ENCODE measurements at regions of chr3 and their contacts with region 1.

Region 1: DNA sequence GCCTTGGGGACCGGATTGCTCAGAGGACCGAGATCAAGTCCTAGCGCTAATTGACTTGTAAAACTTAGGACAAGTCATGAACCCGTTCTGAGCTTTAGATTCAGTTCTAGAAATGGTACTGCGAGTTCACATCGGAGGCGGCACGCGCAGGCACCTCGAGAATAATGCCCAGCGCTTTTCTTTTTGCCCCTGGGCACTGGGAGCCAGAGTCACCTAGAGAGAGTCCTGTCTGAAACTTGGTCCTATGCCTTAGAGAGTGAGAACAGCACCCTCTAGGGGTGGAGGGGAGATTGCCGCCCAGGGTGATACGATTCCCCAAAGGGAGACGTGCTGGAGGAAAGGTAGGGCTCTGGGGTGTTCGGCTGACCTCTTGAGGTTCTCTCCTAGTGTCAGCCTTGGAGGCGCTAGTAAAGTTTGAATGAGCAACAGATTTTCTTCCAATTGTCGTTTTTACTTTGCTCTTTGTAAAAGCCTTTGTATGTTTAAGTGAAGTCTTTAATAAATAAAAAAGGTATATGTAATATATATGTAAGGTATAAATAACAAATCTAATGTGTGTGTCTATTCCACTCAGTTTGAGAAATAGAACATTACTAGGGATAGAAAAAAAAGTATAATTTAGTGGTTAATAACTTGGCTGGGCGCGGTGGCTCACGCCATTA is 826 bp downstream of the EEF1AKMT4 start:
- DNase-seq: peak; percentile 70 to 87 (median 83)
- ATAC-seq: peak; percentile 77
- H3K4me3 ChIP-seq: peak overlapping the region; percentile 100
- H3K4me3 Mint-ChIP-seq: peak overlapping the region; percentile 86 to 100 (median 96)
- H3K27ac ChIP-seq: peak overlapping the region; percentile 78
- H3K27ac Mint-ChIP-seq: peak overlapping the region in 8 of 9 donors; percentile 69 to 98 (median 96)
- H3K4me1 ChIP-seq: peaks cover 5 to 12% of the 10 kb centered on the region in 2 donors
- H3K4me1 Mint-ChIP-seq: peaks cover 5 to 22% (median 16%) of the 10 kb centered on the region in 7 donors
- H3K27me3 ChIP-seq: no peaks in the 10 kb centered on the region
- H3K27me3 Mint-ChIP-seq: no peaks in the 10 kb centered on the region

Region 2: GRCh38 chr3:183895296-183895695 is 355.0 kb before region 1 on chr3:
- CTCF ChIA-PET with region 1: interaction called, 10 read pairs
- POLR2A ChIA-PET with region 1: no interaction called
- intact Hi-C with region 1: loop called (anchors 1 kb)
- DNase-seq: peak in 7 of 9 donors; percentile 19 to 67 (median 49)
- ATAC-seq: peak; percentile 91
- H3K4me3 ChIP-seq: no peak overlapping the region
- H3K4me3 Mint-ChIP-seq: no peak overlapping the region
- H3K27ac ChIP-seq: no peak overlapping the region
- H3K27ac Mint-ChIP-seq: peak overlapping the region in 1 of 9 donors; percentile 18
- H3K4me1 ChIP-seq: no peaks in the 10 kb centered on the region
- H3K4me1 Mint-ChIP-seq: peaks cover 0 to 6% (median 0%) of the 10 kb centered on the region in 7 donors
- H3K27me3 ChIP-seq: peaks cover 0 to 3% of the 10 kb centered on the region in 2 donors
- H3K27me3 Mint-ChIP-seq: peaks cover 7 to 29% (median 11%) of the 10 kb centered on the region in 5 donors

Region 3: DNA sequence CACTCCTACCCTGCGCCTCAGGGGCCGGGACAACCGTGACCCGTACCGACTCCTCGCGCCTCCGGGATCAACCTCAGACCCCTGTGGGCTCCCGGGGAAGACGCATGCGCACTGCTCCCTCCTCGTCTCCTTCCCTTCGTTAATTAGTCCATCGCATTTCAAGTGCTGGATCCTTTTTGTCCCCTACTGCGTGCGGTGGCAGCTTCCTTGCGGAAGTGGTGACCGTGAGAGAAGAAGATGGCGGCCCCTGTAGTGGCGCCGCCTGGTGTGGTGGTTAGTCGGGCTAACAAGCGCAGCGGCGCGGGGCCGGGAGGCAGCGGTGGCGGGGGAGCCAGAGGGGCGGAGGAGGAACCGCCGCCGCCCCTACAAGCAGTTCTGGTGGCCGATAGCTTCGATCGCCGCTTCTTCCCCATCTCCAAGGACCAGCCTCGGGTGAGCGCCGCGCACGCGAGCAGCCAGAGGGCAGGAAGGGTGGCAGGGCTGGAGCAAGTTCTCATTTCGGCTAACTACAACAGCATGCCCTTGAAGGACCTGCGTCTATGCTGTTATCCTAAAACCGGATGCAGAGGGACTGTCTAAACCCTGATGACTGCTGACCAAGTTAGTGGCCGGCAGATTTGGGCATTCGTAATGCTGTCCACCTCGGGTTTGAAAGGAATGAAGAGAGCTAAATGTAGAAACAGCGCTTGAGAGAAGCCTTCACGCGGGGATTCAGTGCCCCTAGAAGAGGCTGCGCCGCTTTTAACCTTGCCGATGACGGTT is 115.0 kb before region 1 on chr3 and contains the start of gene EIF2B5:
- CTCF ChIA-PET with region 1: no interaction called
- POLR2A ChIA-PET with region 1: interaction called, 4 read pairs
- intact Hi-C with region 1: loop called (anchors 1 kb)
- DNase-seq: peak; percentile 63 to 87 (median 84)
- ATAC-seq: peak; percentile 96
- H3K4me3 ChIP-seq: peak within 1 kb of the TSS; percentile 83
- H3K4me3 Mint-ChIP-seq: peak within 1 kb of the TSS; percentile 96 to 100 (median 98)
- H3K27ac ChIP-seq: peak within 1 kb of the TSS; percentile 86
- H3K27ac Mint-ChIP-seq: peak within 1 kb of the TSS; percentile 92 to 98 (median 97)
- H3K4me1 ChIP-seq: peaks cover 4 to 10% of the 10 kb centered on the region in 2 donors
- H3K4me1 Mint-ChIP-seq: peaks cover 29 to 40% (median 38%) of the 10 kb centered on the region in 7 donors
- H3K27me3 ChIP-seq: no peaks in the 10 kb centered on the region
- H3K27me3 Mint-ChIP-seq: peaks cover 0 to 10% (median 0%) of the 10 kb centered on the region in 5 donors
- total RNA-seq, gene EIF2B5: 47.2 to 87.2 (median 67.7) TPM

Region 4: DNA sequence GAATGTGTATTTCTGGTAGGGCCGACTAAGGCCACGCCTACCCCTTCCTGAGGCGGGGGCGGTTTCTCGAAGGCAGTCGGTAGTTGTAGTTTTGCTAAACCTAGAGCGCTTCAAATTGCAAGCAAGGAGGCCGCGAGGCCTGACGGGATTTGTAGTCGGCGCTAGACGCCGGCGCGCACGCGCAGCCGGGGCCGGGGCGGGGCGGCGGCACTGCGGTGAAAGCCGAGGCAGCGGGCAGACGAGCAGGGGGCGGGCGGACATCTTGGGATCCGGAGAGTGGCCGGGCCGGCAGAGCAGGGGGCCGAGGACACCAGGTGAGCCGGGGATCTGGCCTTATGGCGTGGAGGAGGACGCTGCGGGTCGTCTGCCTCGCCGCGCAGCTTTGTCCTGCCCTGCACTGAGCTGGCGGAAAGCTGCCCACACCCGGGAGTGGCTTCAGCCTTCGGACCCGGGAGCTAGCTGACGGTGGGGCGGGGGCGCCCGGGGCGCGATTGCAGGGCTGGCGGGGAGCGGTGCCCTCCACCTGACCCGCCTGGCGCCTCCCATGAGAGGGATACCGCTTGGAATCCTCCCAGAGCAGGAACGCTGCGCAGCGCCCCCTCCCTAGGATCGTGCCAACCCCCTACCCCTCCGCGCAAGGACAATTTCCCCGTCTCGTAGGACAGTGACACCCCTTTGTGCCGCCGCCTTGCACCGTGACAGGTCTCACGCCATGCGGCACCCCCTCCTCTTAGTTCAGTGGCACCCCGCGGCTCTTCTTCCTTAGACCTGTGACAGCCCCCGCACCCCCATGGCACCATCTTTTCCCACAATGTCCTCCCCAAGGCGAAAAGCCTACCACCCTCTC is 75.4 kb before region 1 on chr3 and contains the start of gene AP2M1:
- CTCF ChIA-PET with region 1: no interaction called
- POLR2A ChIA-PET with region 1: interaction called, 3 read pairs
- intact Hi-C with region 1: loop called (anchors 1 kb)
- DNase-seq: peak; percentile 98 to 99 (median 98)
- ATAC-seq: peak; percentile 98
- H3K4me3 ChIP-seq: peak within 1 kb of the TSS; percentile 82
- H3K4me3 Mint-ChIP-seq: peak within 1 kb of the TSS; percentile 89 to 98 (median 96)
- H3K27ac ChIP-seq: peak within 1 kb of the TSS; percentile 95
- H3K27ac Mint-ChIP-seq: peak within 1 kb of the TSS; percentile 75 to 94 (median 90)
- H3K4me1 ChIP-seq: peaks cover 18 to 20% of the 10 kb centered on the region in 2 donors
- H3K4me1 Mint-ChIP-seq: peaks cover 14 to 46% (median 38%) of the 10 kb centered on the region in 7 donors
- H3K27me3 ChIP-seq: no peaks in the 10 kb centered on the region
- H3K27me3 Mint-ChIP-seq: no peaks in the 10 kb centered on the region
- total RNA-seq, gene AP2M1: 111 to 217 (median 185) TPM

Region 5: DNA sequence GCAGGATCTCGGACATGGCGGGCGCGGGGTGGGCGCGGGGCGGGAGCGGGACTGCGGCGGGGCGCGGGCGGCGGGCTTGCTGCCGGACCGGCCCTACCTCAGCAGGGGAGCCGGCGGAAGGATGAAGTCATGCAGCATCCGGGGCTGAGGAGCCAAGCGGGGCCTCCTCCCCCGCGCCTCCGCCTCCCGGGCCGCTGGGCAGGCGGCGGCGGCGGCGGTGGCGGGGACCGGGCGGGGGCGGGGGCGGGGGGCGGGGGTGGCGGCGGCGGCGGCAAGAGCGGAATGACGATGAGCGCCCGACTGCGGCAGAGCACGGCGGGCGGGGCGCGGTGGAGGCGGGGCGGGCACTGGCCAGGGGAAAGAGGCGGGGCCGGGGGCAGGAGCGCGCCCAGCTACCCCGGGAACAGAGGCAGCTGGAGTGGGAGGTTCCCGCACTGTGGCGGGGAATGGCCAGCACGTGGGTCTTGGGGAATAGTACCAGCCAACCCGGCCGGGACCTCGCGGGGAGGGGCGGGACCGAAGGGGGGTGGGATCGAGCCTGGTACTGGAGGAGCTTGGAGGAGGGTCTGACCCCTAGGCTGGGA is 11.1 kb after region 1 on chr3 and contains the start of gene CAMK2N2:
- CTCF ChIA-PET with region 1: interaction called, 6 read pairs
- POLR2A ChIA-PET with region 1: interaction called, 3 read pairs
- intact Hi-C with region 1: loop called (anchors 1 kb)
- DNase-seq: peak in 2 of 9 donors; percentile 26 to 72
- ATAC-seq: peak; percentile 62
- H3K4me3 ChIP-seq: peak within 1 kb of the TSS; percentile 35
- H3K4me3 Mint-ChIP-seq: peak within 1 kb of the TSS; percentile 80 to 98 (median 88)
- H3K27ac ChIP-seq: no peak within 1 kb of the TSS
- H3K27ac Mint-ChIP-seq: peak within 1 kb of the TSS in 6 of 9 donors; percentile 0 to 63 (median 6)
- H3K4me1 ChIP-seq: peaks cover 15 to 20% of the 10 kb centered on the region in 2 donors
- H3K4me1 Mint-ChIP-seq: peaks cover 18 to 27% (median 21%) of the 10 kb centered on the region in 7 donors
- H3K27me3 ChIP-seq: peaks cover 0 to 18% of the 10 kb centered on the region in 2 donors
- H3K27me3 Mint-ChIP-seq: peaks cover 37 to 57% (median 38%) of the 10 kb centered on the region in 5 donors
- total RNA-seq, gene CAMK2N2: not detected

Region 6: GRCh38 chr3:184314363-184314699 is 64.0 kb after region 1 on chr3 and contains the start of gene EIF4G1:
- CTCF ChIA-PET with region 1: no interaction called
- POLR2A ChIA-PET with region 1: no interaction called
- intact Hi-C with region 1: loop called in 1 of 2 experiments (anchors 1 kb)
- DNase-seq: peak; percentile 89 to 95 (median 91)
- ATAC-seq: peak; percentile 95
- H3K4me3 ChIP-seq: peak within 1 kb of the TSS; percentile 73
- H3K4me3 Mint-ChIP-seq: peak within 1 kb of the TSS; percentile 79 to 94 (median 88)
- H3K27ac ChIP-seq: peak within 1 kb of the TSS; percentile 93
- H3K27ac Mint-ChIP-seq: peak within 1 kb of the TSS; percentile 68 to 95 (median 89)
- H3K4me1 ChIP-seq: peaks cover 0 to 17% of the 10 kb centered on the region in 2 donors
- H3K4me1 Mint-ChIP-seq: peaks cover 15 to 35% (median 28%) of the 10 kb centered on the region in 7 donors
- H3K27me3 ChIP-seq: no peaks in the 10 kb centered on the region
- H3K27me3 Mint-ChIP-seq: no peaks in the 10 kb centered on the region
- total RNA-seq, gene EIF4G1: 200 to 341 (median 256) TPM